Endothelial cell of umbilical vein (primary cell): ENCODE measurements at regions of chr11 and their contacts with region 1.

Region 1: DNA sequence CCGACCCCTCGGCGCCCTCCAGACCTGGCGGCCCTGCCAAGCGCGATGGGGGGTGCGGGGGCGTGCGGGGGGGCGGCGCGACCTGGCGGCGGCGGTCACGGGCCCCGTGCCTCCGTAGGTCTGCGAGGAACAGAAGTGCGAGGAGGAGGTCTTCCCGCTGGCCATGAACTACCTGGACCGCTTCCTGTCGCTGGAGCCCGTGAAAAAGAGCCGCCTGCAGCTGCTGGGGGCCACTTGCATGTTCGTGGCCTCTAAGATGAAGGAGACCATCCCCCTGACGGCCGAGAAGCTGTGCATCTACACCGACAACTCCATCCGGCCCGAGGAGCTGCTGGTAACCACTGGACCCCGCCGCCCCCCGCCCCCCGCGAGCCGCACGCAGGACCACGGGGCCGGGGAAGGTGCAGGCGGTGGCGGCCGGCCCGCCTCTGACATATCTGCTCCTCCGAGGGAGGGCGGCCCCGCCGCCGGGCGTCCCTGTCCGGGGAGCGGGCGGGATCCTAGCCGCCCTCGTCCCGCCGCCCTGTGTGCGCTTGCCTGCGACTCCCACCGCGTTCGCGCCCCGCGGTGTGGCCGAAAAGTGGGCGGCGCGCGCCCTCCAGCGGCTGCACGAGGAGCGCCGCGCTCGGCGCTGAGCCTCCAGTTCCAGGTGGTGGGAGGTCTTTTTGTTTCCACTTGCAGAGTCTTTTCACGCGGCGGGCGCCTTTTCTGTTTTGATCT is 2.1 kb downstream of the CCND1 start:
- DNase-seq: peak; percentile 77
- H3K4me3 ChIP-seq: peak overlapping the region; percentile 52 to 90 (median 61)
- H3K27ac ChIP-seq: peak overlapping the region; percentile 67
- H3K4me1 ChIP-seq: peaks cover 29% of the 10 kb centered on the region
- H3K27me3 ChIP-seq: no peaks in the 10 kb centered on the region
- CTCF ChIP-seq: peak; percentile 88 to 91
- POLR2A ChIP-seq: no peak

Region 2: GRCh38 chr11:69101115-69101791 is 541.8 kb before region 1 on chr11:
- CTCF ChIA-PET with region 1: interaction called, 154 read pairs
- POLR2A ChIA-PET with region 1: no interaction called
- dilution Hi-C with region 1: no loop called
- intact Hi-C with region 1: loop called (anchors 1 kb)
- DNase-seq: peak; percentile 71
- H3K4me3 ChIP-seq: no peak overlapping the region
- H3K27ac ChIP-seq: no peak overlapping the region
- H3K4me1 ChIP-seq: peaks cover 5% of the 10 kb centered on the region
- H3K27me3 ChIP-seq: peaks cover 0 to 2% of the 10 kb centered on the region in 2 experiments
- CTCF ChIP-seq: peak; percentile 98 to 99
- POLR2A ChIP-seq: peak; percentile 37

Region 3: GRCh38 chr11:69296890-69297786 is 345.9 kb before region 1 on chr11:
- CTCF ChIA-PET with region 1: interaction called, 56 read pairs
- POLR2A ChIA-PET with region 1: interaction called, 7 read pairs
- dilution Hi-C with region 1: no loop called
- intact Hi-C with region 1: loop called (anchors 1 kb)
- DNase-seq: peak; percentile 98
- H3K4me3 ChIP-seq: peak overlapping the region in 1 of 3 experiments; percentile 29
- H3K27ac ChIP-seq: peak overlapping the region; percentile 98
- H3K4me1 ChIP-seq: peaks cover 63% of the 10 kb centered on the region
- H3K27me3 ChIP-seq: no peaks in the 10 kb centered on the region
- CTCF ChIP-seq: no peak
- POLR2A ChIP-seq: no peak

Region 4: GRCh38 chr11:69362316-69362715 is 280.8 kb before region 1 on chr11:
- CTCF ChIA-PET with region 1: no interaction called
- POLR2A ChIA-PET with region 1: no interaction called
- dilution Hi-C with region 1: no loop called
- intact Hi-C with region 1: loop called (anchors 2 kb)
- DNase-seq: no peak
- H3K4me3 ChIP-seq: no peak overlapping the region
- H3K27ac ChIP-seq: no peak overlapping the region
- H3K4me1 ChIP-seq: peaks cover 21% of the 10 kb centered on the region
- H3K27me3 ChIP-seq: no peaks in the 10 kb centered on the region
- CTCF ChIP-seq: no peak
- POLR2A ChIP-seq: no peak

Region 5: DNA sequence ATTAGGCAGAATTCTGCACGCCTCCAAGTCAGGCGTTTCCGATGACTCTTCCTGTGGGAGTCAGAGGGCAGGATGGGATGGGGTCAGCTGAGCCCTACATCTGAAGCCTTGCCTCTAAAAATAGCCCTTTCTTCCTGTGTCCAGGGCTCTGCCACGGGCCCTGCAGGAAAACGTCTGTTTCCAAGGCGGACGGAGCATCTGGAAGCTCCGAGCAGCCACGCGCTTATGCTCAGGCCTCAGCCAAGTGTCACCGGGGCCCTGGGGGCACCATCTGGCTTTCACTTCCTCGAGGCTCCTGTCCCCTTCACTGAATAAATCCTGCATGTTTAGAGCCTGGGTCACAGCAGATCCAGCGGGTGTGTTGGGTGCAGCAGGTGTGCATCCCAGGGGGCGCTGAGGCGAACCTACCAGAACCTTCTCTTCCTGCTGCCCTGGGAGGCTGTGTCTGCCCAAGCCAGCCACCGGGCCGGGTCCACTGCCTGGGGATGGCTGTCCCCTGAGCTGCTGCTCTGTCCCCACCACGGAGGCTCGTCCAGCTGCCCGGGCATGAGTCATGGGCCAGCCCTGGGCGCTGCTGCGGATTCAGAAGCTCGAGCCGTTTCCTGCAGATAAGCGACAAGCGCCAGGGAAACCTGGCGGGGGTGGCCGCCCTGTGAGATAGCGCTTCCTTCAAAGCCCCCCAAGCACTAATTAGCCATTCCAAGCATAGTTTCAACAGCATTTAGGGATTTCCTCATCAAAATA is 193.6 kb before region 1 on chr11:
- CTCF ChIA-PET with region 1: interaction called, 6 read pairs
- POLR2A ChIA-PET with region 1: interaction called, 4 read pairs
- dilution Hi-C with region 1: no loop called
- intact Hi-C with region 1: loop called (anchors 1 kb)
- DNase-seq: peak; percentile 92
- H3K4me3 ChIP-seq: no peak overlapping the region
- H3K27ac ChIP-seq: peak overlapping the region; percentile 98
- H3K4me1 ChIP-seq: peaks cover 38% of the 10 kb centered on the region
- H3K27me3 ChIP-seq: no peaks in the 10 kb centered on the region
- CTCF ChIP-seq: no peak
- POLR2A ChIP-seq: peak; percentile 84

Region 6: GRCh38 chr11:69670158-69670845 is 27.2 kb after region 1 on chr11:
- CTCF ChIA-PET with region 1: interaction called, 31 read pairs
- POLR2A ChIA-PET with region 1: interaction called, 3 read pairs
- dilution Hi-C with region 1: no loop called
- intact Hi-C with region 1: loop called (anchors 2 kb)
- DNase-seq: peak; percentile 83
- H3K4me3 ChIP-seq: no peak overlapping the region
- H3K27ac ChIP-seq: no peak overlapping the region
- H3K4me1 ChIP-seq: peaks cover 9% of the 10 kb centered on the region
- H3K27me3 ChIP-seq: no peaks in the 10 kb centered on the region
- CTCF ChIP-seq: peak; percentile 94 to 97
- POLR2A ChIP-seq: peak; percentile 45

Region 7: GRCh38 chr11:69854719-69855118 is 211.6 kb after region 1 on chr11:
- CTCF ChIA-PET with region 1: no interaction called
- POLR2A ChIA-PET with region 1: no interaction called
- dilution Hi-C with region 1: no loop called
- intact Hi-C with region 1: no loop called
- DNase-seq: no peak
- H3K4me3 ChIP-seq: no peak overlapping the region
- H3K27ac ChIP-seq: no peak overlapping the region
- H3K4me1 ChIP-seq: no peaks in the 10 kb centered on the region
- H3K27me3 ChIP-seq: peaks cover 1 to 14% of the 10 kb centered on the region in 2 experiments
- CTCF ChIP-seq: no peak
- POLR2A ChIP-seq: no peak